HEK293 (cell line): ENCODE measurements at regions of chr2 and their contacts with region 1.

Region 1: DNA sequence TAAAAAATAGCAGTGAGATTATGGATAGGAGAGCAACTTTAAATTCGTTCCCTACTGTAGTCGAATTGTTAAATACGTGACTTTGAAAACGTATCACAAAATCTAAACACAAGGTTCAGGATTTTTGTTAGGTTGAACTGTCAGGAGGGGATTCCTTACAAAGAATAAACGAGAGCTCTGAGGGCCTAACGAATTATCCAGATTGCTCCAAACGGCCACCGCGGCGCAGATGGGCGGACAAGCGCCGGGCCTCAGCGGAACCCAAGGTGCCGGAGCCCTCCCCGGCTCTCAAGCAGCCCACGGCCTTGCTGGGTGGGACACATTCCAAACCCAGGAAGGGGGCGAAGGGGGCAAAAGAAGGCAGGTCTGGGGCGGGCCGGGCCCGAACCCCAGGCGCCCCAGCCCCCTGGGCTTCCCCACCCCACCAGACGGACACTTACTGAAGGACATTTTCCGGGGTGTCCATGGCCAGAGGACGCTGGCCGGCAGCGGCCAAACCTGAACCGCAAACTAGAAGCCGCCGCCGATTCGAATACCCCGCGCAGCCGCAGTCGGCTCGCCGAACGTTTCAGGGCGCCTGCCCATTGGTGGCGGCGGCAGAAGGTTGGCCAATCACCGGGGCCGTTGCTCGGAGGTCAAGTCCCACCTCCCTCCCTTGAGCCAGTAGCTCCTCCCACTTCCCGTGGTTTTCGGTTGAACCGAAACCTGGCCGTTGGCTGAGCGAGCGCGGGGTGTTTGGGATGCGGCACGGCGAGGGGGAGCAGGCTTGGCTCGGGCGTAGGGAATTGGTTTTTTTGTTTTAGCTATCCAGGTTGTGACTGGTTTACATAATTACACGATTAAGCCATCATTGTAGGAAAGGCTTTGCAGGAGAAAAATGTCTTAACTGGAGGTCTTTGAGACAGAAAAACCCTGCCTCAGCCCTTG is at the start of gene BUB1:
- H3K4me3 ChIP-seq: peak within 1 kb of the TSS; percentile 93
- H3K27ac ChIP-seq: peak within 1 kb of the TSS; percentile 86
- H3K4me1 ChIP-seq: peaks cover 7% of the 10 kb centered on the region
- CTCF ChIP-seq: no peak

Region 2: GRCh38 chr2:110732422-110733413 is 54.9 kb after region 1 on chr2 and contains the start of gene ACOXL:
- CTCF ChIA-PET with region 1: no interaction called
- POLR2A ChIA-PET with region 1: interaction called, 16 read pairs
- H3K4me3 ChIP-seq: peak within 1 kb of the TSS; percentile 46
- H3K27ac ChIP-seq: peak within 1 kb of the TSS; percentile 52; the same call in 1 of the 2 replicates
- H3K4me1 ChIP-seq: peaks cover 5% of the 10 kb centered on the region; the same call in 1 of the 2 replicates
- CTCF ChIP-seq: no peak

Region 3: DNA sequence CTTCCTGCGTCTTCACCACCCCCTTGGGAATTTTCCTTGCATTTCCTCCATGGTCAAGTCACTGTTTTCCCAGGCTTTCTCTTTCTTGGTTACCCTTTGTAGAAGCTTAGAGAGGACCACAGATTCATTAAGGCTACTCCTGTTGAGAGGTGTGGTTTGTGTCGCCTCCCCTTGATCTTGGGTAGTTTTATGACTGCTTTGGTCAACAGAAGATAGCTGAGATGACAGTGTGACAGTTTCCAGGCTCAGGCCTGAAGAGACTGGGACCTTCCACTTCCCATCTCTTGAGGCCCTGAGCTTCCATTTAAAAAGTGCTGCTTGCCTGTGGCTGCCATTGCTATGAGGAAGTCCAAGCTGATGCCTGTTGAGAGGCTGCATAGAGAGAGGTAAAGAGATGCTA is 60.0 kb after region 1 on chr2:
- CTCF ChIA-PET with region 1: no interaction called
- POLR2A ChIA-PET with region 1: interaction called, 16 read pairs
- H3K4me3 ChIP-seq: no peak overlapping the region
- H3K27ac ChIP-seq: no peak overlapping the region
- H3K4me1 ChIP-seq: peaks cover 10% of the 10 kb centered on the region; the same call in 1 of the 2 replicates
- CTCF ChIP-seq: no peak

Region 4: DNA sequence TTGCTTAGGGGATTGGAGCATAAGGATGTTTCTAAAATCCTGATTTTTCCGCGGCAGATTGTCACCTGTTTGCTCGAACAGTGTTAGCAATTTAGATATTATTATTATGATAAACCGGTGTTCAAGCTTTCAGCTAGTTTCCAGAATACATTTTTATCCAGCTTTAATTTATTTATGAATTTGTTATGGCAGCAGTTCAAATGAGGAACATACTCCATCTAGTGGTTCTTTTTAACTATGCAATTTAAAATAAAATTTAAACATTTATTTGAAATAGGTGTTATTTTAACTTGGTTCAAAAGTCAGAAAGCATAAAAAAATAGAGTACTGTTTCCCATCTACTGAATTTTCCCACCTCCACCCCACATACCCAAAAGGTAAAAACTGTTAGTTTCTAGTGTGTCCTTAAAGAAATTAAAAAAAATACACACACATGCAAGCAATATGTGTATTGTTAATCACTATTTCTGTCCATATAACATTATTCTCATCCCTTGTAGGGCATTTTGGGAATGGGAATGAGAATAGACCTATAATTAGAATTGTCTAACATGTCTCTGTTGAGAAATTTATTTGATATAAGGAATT is 77.8 kb after region 1 on chr2:
- CTCF ChIA-PET with region 1: interaction called, 26 read pairs
- POLR2A ChIA-PET with region 1: interaction called, 3 read pairs
- H3K4me3 ChIP-seq: no peak overlapping the region
- H3K27ac ChIP-seq: no peak overlapping the region
- H3K4me1 ChIP-seq: no peaks in the 10 kb centered on the region
- CTCF ChIP-seq: no peak